HepG2 (cell line): ENCODE measurements at regions of chr1 and their contacts with region 1.

Region 1: DNA sequence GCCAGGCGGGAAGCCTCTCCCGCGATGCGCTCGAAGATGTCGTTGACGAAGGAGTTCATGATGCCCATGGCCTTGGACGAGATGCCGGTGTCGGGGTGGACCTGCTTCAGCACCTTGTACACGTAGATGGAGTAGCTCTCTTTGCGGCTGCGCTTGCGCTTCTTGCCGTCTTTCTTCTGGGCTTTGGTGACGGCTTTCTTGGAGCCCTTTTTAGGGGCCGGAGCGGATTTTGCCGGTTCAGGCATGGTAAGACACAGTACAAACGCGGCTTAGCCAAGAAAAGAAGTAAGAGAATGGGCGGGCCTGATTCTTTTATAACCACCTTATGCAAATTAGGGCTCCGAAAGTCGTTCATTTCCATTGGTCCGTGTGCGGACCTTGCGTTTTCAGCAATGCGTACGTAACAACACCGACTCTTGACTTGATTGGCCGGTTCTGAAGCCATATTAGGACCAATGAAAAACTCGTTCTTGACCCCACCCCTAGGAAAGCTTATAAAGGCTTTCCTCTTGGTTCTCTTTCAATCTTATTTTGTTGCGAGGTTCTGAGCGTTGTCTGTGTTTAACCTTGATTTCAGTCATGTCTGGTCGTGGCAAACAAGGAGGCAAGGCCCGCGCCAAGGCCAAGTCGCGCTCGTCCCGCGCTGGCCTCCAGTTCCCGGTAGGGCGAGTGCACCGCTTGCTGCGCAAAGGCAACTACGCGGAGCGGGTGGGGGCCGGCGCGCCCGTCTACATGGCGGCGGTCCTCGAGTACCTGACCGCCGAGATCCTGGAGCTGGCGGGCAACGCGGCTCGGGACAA is 12.8 kb upstream of the BOLA1 start:
- DNase-seq: peak; percentile 99
- ATAC-seq: peak; percentile 70
- H3K4me3 ChIP-seq: peak overlapping the region; percentile 64 to 76 (median 68); a peak in 5 of 6 replicates
- H3K27ac ChIP-seq: peak overlapping the region; percentile 95
- H3K4me1 ChIP-seq: peaks cover 45% of the 10 kb centered on the region
- H3K27me3 ChIP-seq: no peaks in the 10 kb centered on the region; a peak in 1 of 5 replicates
- CTCF ChIP-seq: no peak
- EP300 ChIP-seq: no peak
- POLR2A ChIP-seq: peak; percentile 81 to 95
- RAD21 ChIP-seq: no peak

Region 2: GRCh38 chr1:149849947-149850360 is 36.6 kb before region 1 on chr1:
- CTCF ChIA-PET with region 1: no interaction called
- POLR2A ChIA-PET with region 1: interaction called, 47 read pairs
- in situ Hi-C with region 1: no loop called
- intact Hi-C with region 1: no loop called
- DNase-seq: no peak
- ATAC-seq: no peak
- H3K4me3 ChIP-seq: peak overlapping the region; percentile 67 to 70 (median 70)
- H3K27ac ChIP-seq: peak overlapping the region; percentile 78
- H3K4me1 ChIP-seq: peaks cover 46% of the 10 kb centered on the region
- H3K27me3 ChIP-seq: no peaks in the 10 kb centered on the region; a peak in 1 of 5 replicates
- CTCF ChIP-seq: no peak
- EP300 ChIP-seq: no peak
- POLR2A ChIP-seq: peak in 1 of 2 experiments; percentile 47; a peak in 2 of 4 replicates
- RAD21 ChIP-seq: no peak

Region 3: DNA sequence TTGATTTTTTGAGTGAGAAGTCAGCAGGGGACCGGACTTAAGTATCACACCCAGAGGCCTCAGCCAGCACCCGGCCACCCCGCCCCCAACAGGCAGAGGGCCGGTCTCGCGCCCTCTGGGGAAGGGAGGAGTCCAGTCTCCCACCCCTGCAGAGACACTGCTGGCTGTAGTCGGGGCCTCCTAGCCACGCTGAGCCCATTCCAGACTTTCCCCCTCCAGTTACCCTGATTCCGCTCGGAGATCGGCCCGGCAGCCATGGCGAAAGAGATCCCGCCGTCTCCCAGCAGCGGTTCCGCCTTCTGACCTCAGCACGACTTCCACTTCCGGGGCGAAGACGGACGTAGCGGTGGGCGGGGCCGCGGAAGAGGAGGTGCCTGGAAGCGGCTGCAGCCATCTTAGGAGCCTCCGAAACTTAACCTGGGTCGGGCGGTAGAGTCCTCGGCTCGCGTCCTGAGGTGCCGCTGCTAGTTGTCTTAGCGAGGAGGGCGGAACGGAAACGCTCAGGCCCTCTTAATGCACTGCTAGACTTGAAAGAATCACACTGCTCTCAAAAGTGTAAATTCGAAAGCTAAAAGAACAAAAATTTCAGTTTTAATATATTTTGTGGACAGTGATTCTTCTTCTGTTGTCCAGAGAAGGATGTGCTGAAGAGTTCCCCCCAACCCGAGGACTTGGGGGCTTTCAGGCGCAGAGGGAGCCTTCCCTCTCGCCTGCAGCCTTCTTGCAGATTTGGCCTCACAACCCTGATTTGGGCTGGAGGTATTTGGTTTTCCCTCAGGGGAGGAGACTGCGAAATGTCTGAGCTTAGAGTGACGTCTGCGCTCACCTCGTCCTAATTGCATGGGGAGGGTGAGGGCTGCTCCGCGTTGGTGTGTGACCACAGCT is 41.1 kb after region 1 on chr1 and contains the start of gene SF3B4:
- CTCF ChIA-PET with region 1: no interaction called
- POLR2A ChIA-PET with region 1: interaction called, 27 read pairs
- in situ Hi-C with region 1: no loop called
- intact Hi-C with region 1: no loop called
- DNase-seq: peak; percentile 87
- ATAC-seq: peak; percentile 99
- H3K4me3 ChIP-seq: peak within 1 kb of the TSS; percentile 90 to 99 (median 92)
- H3K27ac ChIP-seq: peak within 1 kb of the TSS; percentile 88
- H3K4me1 ChIP-seq: peaks cover 30% of the 10 kb centered on the region
- H3K27me3 ChIP-seq: no peaks in the 10 kb centered on the region; a peak in 1 of 5 replicates
- CTCF ChIP-seq: 0 out of 2 replicates have a peak, but pooled peaks have one; percentile 18
- EP300 ChIP-seq: 0 out of 4 replicates have a peak, but pooled peaks of 1 of the 2 experiments have one; percentile 16
- POLR2A ChIP-seq: peak; percentile 94 to 95
- RAD21 ChIP-seq: 0 out of 2 replicates have a peak, but pooled peaks have one; percentile 14
- total RNA-seq, gene SF3B4: 14.8 and 24.6 TPM in 2 replicates

Region 4: DNA sequence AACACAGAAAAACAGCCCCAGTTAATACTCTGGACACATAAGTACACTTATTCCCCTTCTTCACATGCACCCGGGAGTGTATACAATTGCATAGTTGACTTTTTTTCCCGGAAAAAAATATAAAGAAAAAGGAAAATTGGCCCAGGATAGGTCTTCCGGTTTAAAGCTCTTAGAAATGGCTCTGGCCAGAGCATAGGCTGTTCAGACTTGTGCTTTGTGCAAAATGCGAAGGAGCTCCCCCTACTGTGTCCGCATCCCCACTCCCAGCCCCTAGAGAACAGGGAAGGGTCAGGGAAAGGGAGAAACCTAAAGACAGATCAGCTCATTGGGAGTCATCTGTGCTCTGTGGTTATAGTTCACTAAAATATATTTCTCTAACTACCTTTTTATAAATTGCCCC is 55.6 kb after region 1 on chr1:
- CTCF ChIA-PET with region 1: interaction called, 6 read pairs
- POLR2A ChIA-PET with region 1: interaction called, 74 read pairs
- in situ Hi-C with region 1: no loop called
- intact Hi-C with region 1: loop called (anchors 1 kb)
- DNase-seq: peak; percentile 56
- ATAC-seq: peak; percentile 80
- H3K4me3 ChIP-seq: no peak overlapping the region
- H3K27ac ChIP-seq: no peak overlapping the region
- H3K4me1 ChIP-seq: peaks cover 33% of the 10 kb centered on the region
- H3K27me3 ChIP-seq: no peaks in the 10 kb centered on the region
- CTCF ChIP-seq: peak; percentile 64
- EP300 ChIP-seq: no peak
- POLR2A ChIP-seq: no peak
- RAD21 ChIP-seq: peak; percentile 22; the same call in 1 of the 2 replicates

Region 5: DNA sequence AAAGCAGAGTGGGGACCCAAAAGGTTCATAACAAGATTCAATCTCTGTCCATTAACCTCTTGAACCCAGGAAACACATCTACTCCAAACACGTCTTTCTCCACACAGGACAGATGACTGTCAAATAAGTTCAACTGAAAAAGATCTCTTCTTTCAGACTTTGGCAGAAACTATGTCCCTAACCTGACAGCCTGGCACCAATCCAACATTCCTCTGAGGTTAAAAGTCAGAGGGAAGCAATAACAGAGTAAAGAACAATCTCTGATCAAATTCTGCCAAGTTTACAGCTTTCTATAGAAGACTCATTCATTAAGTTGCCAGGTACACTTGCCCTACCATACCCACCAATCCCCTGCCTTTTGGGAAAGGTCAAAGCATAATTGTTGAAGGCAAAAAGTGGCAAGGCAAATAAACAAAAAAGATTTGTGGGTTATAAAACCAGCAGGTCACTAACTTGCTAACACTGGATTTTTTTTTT is 92.0 kb after region 1 on chr1:
- CTCF ChIA-PET with region 1: no interaction called
- POLR2A ChIA-PET with region 1: no interaction called
- in situ Hi-C with region 1: no loop called
- intact Hi-C with region 1: no loop called
- DNase-seq: peak; percentile 86
- ATAC-seq: peak; percentile 85
- H3K4me3 ChIP-seq: no peak overlapping the region
- H3K27ac ChIP-seq: peak overlapping the region; percentile 22
- H3K4me1 ChIP-seq: peaks cover 44% of the 10 kb centered on the region
- H3K27me3 ChIP-seq: no peaks in the 10 kb centered on the region
- CTCF ChIP-seq: no peak
- EP300 ChIP-seq: 0 out of 4 replicates have a peak, but pooled peaks of 1 of the 2 experiments have one; percentile 11
- POLR2A ChIP-seq: no peak
- RAD21 ChIP-seq: no peak

Region 6: GRCh38 chr1:150053926-150054325 is 167.3 kb after region 1 on chr1:
- CTCF ChIA-PET with region 1: no interaction called
- POLR2A ChIA-PET with region 1: interaction called, 4 read pairs
- in situ Hi-C with region 1: no loop called
- intact Hi-C with region 1: loop called (anchors 1 kb)
- DNase-seq: no peak
- ATAC-seq: no peak
- H3K4me3 ChIP-seq: no peak overlapping the region
- H3K27ac ChIP-seq: no peak overlapping the region
- H3K4me1 ChIP-seq: peaks cover 16% of the 10 kb centered on the region; the same call in 1 of the 2 replicates
- H3K27me3 ChIP-seq: no peaks in the 10 kb centered on the region
- CTCF ChIP-seq: no peak
- EP300 ChIP-seq: no peak
- POLR2A ChIP-seq: no peak
- RAD21 ChIP-seq: no peak

Region 7: GRCh38 chr1:150106341-150106740 is 219.7 kb after region 1 on chr1:
- CTCF ChIA-PET with region 1: no interaction called
- POLR2A ChIA-PET with region 1: no interaction called
- in situ Hi-C with region 1: no loop called
- intact Hi-C with region 1: no loop called
- DNase-seq: no peak
- ATAC-seq: no peak
- H3K4me3 ChIP-seq: no peak overlapping the region
- H3K27ac ChIP-seq: no peak overlapping the region
- H3K4me1 ChIP-seq: no peaks in the 10 kb centered on the region
- H3K27me3 ChIP-seq: no peaks in the 10 kb centered on the region
- CTCF ChIP-seq: no peak
- EP300 ChIP-seq: no peak
- POLR2A ChIP-seq: no peak
- RAD21 ChIP-seq: no peak

Region 8: DNA sequence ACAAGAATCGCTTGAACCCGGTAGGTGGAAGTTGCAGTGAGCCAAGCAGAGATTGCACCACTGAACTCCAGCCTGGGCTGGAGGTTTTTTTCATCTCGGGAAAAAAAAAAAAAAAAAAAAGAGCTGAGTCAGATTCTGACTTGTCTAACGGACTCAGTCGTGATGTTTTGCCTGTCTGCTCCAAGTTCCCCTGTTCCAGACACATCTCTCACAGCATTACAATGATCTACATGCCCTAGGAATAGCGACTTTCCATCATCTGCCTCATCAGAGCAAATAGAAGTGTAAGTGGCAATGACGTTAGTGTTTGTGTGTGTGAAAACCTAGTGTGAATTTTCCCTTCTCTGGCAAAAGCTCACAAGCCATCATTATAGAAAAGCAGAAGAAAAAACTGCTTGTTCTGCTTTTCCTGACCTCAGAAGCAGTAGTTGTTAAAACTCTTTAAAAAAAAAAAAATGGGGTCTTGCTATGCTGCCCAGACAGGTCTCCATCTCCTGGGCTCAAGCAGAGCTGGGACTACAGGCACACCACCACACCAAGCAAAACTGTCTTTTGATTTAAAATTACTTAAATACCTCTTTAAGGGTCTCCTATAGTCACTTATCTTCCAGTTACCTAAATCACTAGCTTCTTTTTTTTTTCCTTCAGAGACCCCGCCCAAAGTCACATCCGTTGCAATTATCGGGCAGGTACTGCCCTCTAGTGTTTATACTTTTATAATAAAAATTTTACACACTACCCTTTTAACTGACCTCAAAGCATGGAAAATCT is 300.4 kb after region 1 on chr1:
- CTCF ChIA-PET with region 1: interaction called, 5 read pairs
- POLR2A ChIA-PET with region 1: interaction called, 18 read pairs
- in situ Hi-C with region 1: no loop called
- intact Hi-C with region 1: no loop called
- DNase-seq: peak; percentile 46
- ATAC-seq: peak; percentile 74
- H3K4me3 ChIP-seq: peak overlapping the region; percentile 35 to 55 (median 45)
- H3K27ac ChIP-seq: no peak overlapping the region
- H3K4me1 ChIP-seq: peaks cover 34% of the 10 kb centered on the region
- H3K27me3 ChIP-seq: peaks cover 0 to 3% of the 10 kb centered on the region in 2 experiments; a peak in 2 of 5 replicates
- CTCF ChIP-seq: peak; percentile 52
- EP300 ChIP-seq: no peak
- POLR2A ChIP-seq: no peak
- RAD21 ChIP-seq: peak; percentile 17; the same call in 1 of the 2 replicates

Region 9: GRCh38 chr1:150410582-150411101 is 524.0 kb after region 1 on chr1:
- CTCF ChIA-PET with region 1: no interaction called
- POLR2A ChIA-PET with region 1: no interaction called
- in situ Hi-C with region 1: no loop called
- intact Hi-C with region 1: no loop called
- DNase-seq: peak; percentile 99
- ATAC-seq: peak; percentile 95
- H3K4me3 ChIP-seq: peak overlapping the region in 2 of 3 experiments; percentile 30 to 50; a peak in 3 of 6 replicates
- H3K27ac ChIP-seq: peak overlapping the region; percentile 75
- H3K4me1 ChIP-seq: peaks cover 66% of the 10 kb centered on the region
- H3K27me3 ChIP-seq: no peaks in the 10 kb centered on the region
- CTCF ChIP-seq: no peak
- EP300 ChIP-seq: peak; percentile 52 to 90; a peak in 3 of 4 replicates
- POLR2A ChIP-seq: no peak
- RAD21 ChIP-seq: 0 out of 2 replicates have a peak, but pooled peaks have one; percentile 24